Posterior vena cava (tissue), 2 donors: ENCODE measurements at regions of chr9 and their contacts with region 1.

Region 1: DNA sequence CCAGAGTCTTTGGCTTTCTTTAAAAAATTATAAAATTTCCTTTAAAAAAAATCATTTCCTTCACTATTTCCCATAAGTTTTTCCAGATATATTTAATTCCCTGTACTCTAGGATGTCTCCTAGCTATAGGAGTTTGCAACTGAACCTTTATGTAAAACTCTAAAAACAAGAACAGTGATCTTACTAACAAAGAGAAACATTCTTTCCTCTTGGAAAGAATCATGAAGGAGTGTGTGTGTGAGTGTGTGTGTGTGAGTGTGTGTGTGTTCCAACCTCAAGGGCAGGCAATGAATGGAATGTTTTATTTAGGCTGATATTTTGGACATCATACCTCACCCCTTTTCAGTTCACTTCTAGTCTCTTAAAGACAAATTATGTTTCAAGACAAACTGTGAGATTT is 309.2 kb downstream of the CEMIP2 start:
- DNase-seq: no peak

Region 2: DNA sequence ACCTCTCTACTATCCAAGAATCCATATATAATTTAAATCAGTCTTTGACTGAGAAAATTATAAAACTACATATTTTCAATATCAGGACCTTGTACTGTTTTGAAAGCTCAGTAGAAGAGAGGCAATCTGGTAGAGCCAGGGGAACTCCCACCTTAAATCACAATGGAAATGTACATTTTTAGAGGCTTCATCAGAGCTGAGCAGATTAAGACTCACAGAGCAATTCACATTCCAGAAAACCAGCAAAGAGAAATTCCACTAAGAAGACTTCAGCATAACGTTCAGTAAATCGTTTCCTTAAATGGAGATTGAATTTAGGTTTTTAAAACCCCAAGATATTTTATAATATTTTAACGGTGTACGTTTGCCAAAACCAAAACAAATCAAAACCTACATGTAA is 109.9 kb before region 1 on chr9:
- intact Hi-C with region 1: loop called in 1 of 2 experiments (anchors 5 kb)
- DNase-seq: no peak

Region 3: GRCh38 chr9:71431931-71432330 is 27.2 kb before region 1 on chr9:
- intact Hi-C with region 1: loop called in 1 of 2 experiments (anchors 1 kb)
- DNase-seq: no peak

Region 4: GRCh38 chr9:71587576-71588362 is 128.7 kb after region 1 on chr9:
- intact Hi-C with region 1: no loop called
- DNase-seq: no peak

Region 5: GRCh38 chr9:71663931-71664459 is 204.9 kb after region 1 on chr9:
- intact Hi-C with region 1: no loop called
- DNase-seq: no peak